Activated T-helper 1 cell treated with anti-CD3 and anti-CD28 coated beads, Interleukin-12 subunit alpha, Interleukin-12 subunit beta, Interleukin-2, Interleukin-4 antibody, amounts not matched to agents 30 ng/mL and 10 ng/mL and 1 ng/mL, durations not matched to agents 14 hours and 24 hours and 36 hours (primary cell): ENCODE measurements at regions of chr3 and their contacts with region 1.

Region 1: DNA sequence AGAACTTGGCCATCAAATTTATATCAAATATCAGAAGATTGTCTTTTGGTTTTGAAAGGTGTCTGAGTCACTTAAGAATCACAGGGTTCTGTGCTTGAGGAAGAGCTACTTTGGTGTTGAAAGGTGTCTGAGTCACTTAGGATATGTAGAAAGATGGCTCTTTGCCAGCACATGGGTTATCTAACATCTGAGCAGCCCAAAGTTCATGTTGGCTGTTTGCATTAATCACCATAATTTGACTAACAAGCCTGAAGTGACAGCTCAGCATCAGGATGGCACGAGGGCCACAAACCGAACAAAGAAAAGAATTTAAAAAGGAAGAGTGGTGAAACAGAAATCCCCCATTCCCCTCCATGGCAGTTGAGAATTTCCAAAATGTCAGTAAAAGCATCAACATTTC is 190.5 kb upstream of the CMC1 start:
- DNase-seq: no peak
- H3K4me3 Mint-ChIP-seq: no peak overlapping the region
- H3K27ac Mint-ChIP-seq: peak overlapping the region; percentile 18
- H3K4me1 Mint-ChIP-seq: peaks cover 12% of the 10 kb centered on the region
- H3K27me3 Mint-ChIP-seq: no peaks in the 10 kb centered on the region

Region 2: DNA sequence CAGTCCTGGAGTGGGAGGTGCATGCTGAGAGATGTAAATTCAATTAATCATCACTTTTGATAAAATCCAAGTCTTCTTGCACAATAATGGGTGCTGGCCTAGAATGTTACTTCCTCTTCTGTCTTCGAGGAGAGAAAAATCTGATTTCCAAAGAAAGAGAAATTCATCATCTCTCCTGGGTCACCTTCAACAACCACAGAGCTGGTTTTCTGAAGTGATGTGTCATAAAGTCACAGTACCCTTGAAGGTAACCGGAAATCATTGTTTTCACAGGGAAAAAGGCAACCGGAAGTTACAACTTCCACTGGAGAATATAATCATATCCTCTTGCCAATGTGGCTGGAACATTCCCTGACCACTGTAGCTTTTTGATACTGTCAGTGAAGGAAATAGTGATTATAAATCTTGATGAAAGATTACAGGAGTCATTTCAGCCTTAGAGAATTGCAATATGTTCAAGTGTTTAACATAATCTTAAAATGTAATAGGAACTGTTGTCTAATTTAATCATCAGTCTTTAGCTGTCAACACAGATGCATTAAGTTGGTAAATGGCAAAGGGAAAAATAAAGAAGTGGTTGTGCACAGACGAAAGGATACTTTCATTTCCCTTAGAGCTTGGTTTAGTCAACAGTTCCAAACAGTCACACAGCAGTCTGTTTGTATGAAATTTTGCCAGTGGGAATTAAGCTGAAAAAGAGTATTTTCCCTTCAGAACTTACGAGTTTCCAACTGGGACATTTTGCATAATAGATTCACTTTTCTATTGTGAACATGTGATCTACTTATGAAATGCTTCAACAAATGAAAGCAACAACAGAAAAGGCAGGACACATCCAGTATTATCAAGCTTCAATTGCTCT is 460.2 kb before region 1 on chr3:
- intact Hi-C with region 1: loop called (anchors 5 kb)
- DNase-seq: no peak
- H3K4me3 Mint-ChIP-seq: peak overlapping the region; percentile 31
- H3K27ac Mint-ChIP-seq: peak overlapping the region; percentile 76
- H3K4me1 Mint-ChIP-seq: peaks cover 28% of the 10 kb centered on the region
- H3K27me3 Mint-ChIP-seq: no peaks in the 10 kb centered on the region

Region 3: GRCh38 chr3:27758083-27758482 is 292.8 kb before region 1 on chr3:
- intact Hi-C with region 1: loop called (anchors 10 kb)
- DNase-seq: no peak
- H3K4me3 Mint-ChIP-seq: no peak overlapping the region
- H3K27ac Mint-ChIP-seq: peak overlapping the region; percentile 72
- H3K4me1 Mint-ChIP-seq: peaks cover 23% of the 10 kb centered on the region
- H3K27me3 Mint-ChIP-seq: peaks cover 3% of the 10 kb centered on the region

Region 4: GRCh38 chr3:27900316-27900715 is 150.6 kb before region 1 on chr3:
- intact Hi-C with region 1: loop called (anchors 5 kb)
- DNase-seq: peak; percentile 24
- H3K4me3 Mint-ChIP-seq: peak overlapping the region; percentile 2
- H3K27ac Mint-ChIP-seq: peak overlapping the region; percentile 24
- H3K4me1 Mint-ChIP-seq: peaks cover 56% of the 10 kb centered on the region
- H3K27me3 Mint-ChIP-seq: peaks cover 4% of the 10 kb centered on the region

Region 5: DNA sequence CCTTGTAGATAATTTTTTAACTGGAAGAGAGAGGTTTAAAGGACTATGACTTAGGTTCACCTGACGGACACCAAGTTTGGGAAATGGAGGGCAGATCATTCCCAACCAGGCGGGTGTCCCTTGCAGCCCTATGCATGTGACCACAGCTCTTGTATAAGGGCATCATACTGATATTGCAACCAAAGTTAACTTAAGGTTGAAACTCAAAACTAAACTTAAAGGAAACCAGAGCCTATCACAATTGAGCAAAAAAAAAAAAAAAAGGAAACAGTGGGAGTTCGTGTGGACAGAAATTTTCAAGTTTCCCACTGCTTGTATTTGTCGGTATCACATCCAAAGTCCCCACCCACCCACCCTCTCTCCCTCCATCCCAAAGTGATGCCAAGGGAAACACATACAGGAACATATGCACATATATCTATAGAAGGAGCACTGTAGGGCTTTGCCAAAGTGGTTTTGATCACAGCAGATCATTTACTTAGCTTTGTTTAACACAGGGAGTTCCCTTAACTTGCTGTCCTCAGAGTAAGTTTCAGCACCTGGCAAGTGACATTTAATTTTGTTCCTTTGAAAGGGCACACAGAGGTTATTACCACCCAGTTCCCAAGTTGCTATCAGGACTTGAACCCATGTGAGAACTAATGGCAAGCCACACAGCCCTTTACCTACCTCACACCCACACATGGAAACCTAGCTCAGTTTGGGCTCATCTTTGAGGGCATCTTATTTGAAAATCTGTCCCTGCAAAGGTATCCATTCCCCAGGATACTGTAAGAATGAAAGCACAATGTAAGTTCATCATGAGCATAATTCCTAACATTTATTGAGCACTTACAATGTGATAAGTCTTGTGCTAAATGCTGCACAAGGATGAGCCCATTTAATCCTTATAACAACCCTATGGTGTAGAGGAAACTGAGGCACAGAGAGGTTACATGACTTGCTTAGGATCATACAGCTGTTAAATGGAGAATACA is 14.0 kb before region 1 on chr3:
- intact Hi-C with region 1: loop called (anchors 2 kb)
- DNase-seq: no peak
- H3K4me3 Mint-ChIP-seq: no peak overlapping the region
- H3K27ac Mint-ChIP-seq: peak overlapping the region; percentile 19
- H3K4me1 Mint-ChIP-seq: peaks cover 23% of the 10 kb centered on the region
- H3K27me3 Mint-ChIP-seq: no peaks in the 10 kb centered on the region

Region 6: DNA sequence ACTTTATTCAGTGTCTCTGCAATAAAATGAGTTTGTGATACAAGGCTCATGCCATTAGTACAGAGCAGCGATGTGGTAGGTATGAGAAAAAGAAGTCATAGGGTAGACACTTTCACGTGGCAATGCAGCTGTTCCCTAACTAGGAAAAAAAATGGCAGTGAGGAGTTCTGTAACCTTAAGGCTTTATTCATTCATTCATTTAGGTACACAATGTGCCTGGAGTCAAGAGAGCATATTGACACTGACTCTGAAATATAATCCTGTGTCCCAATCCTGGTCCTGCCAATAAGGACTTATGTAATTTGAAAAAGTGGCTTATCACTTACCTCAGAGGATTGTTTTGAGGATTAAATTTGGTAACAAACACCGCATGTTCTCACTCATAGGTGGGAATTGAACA is 470.8 kb after region 1 on chr3:
- intact Hi-C with region 1: no loop called
- DNase-seq: no peak
- H3K4me3 Mint-ChIP-seq: no peak overlapping the region
- H3K27ac Mint-ChIP-seq: no peak overlapping the region
- H3K4me1 Mint-ChIP-seq: no peaks in the 10 kb centered on the region
- H3K27me3 Mint-ChIP-seq: no peaks in the 10 kb centered on the region